Lower leg skin (tissue), 4 donors: ENCODE measurements at regions of chr9 and their contacts with region 1.

Region 1: DNA sequence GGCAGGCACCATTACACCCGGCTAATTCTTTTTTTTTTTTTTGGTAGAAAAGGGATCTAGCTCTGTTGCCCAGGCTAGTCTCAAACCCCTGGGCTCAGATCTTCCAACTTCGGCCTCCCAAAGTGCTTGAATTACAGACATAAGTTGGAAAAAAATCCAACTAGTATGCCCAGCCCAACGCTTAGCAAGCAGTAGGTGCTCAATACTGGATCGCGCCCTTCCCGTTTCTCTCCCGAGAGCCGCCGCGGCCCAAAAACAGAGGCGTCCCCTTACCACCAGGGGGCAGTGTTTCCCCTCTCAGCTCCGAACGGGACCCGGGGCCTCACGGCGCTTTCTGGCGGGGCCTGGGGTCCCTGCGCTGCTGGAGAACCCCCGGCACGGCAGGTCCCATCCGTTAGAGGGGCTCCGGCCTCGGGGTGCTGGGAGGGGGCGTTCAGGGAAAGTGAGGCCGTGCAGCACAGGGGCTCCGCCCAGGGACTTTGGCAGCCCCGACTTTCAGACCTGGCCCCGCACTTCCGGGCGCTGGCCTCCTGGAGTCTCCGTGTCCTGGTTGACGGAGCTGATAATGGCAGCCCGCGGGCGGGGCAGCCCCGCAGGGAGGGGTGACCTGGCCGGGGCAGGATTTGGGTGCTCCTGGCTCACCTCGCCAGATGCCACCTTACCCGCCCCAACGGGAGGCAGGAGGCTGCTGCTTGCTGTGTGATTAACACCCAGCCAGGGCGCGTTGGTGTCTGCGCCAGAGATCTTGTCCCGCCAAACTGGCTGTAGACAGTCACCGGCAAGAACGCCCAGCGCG is 15.2 kb downstream of the PTGES start:
- DNase-seq: peak; percentile 86 to 98
- H3K4me3 ChIP-seq: peak overlapping the region; percentile 18
- CTCF ChIP-seq: peak in 2 of 3 donors; percentile 24 to 88
- POLR2A ChIP-seq: no peak

Region 2: GRCh38 chr9:129783516-129784361 is 46.1 kb after region 1 on chr9:
- intact Hi-C with region 1: loop called (anchors 2 kb)
- DNase-seq: peak; percentile 69 to 95
- H3K4me3 ChIP-seq: no peak overlapping the region
- CTCF ChIP-seq: peak in 1 of 3 donors; percentile 87
- POLR2A ChIP-seq: no peak